CD8-positive, alpha-beta T cell (primary cell): ENCODE measurements at regions of chr3 and their contacts with region 1.

Region 1: DNA sequence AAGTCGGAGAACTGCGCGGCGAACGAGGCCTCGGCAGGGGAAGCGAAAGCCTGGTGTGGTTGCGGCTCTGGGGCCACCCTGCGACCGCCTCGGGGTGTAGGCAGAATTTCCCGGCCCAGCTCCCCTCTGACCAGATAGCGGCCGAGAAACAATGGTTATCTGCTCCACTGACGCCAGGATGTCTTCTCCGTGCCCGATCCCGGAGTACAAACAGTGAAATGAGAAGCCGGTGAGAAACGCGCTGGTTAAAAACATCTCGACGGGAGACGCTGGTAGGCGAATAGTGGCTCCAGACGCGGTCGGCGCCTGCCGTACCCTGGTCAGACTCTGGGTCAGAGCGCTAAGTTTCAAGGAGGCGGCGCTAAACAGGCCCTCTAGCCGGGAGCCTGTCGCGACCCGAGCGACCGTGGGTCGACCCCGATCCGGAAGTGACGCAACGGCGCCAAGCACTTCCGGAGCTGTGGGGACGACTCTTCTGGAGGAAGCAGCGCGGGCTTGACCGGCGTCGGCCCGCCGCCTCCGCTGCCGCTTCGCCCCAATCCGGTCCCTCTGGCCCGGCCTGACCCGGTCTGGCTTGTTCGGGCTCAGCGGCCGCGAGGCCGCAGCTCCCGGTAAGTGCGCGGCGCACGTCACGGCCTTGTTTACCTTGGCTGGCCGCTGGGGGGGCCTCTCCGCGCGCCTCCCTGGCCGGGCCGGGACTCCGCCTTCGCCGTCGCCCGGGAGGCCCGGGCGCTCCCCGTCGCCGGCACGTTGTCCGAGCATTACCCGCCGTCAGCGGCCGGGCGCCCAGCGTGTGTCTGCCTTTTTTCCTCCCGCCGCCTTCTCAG is at the start of gene ARIH2:
- DNase-seq: peak; percentile 74 to 95 (median 88)
- ATAC-seq: peak; percentile 72
- H3K4me3 ChIP-seq: peak within 1 kb of the TSS; percentile 92 to 93
- H3K4me3 Mint-ChIP-seq: peak within 1 kb of the TSS; percentile 98
- H3K27ac ChIP-seq: peak within 1 kb of the TSS; percentile 99
- H3K27ac Mint-ChIP-seq: peak within 1 kb of the TSS; percentile 99
- H3K4me1 ChIP-seq: peaks cover 22% of the 10 kb centered on the region
- H3K4me1 Mint-ChIP-seq: peaks cover 27% of the 10 kb centered on the region
- H3K27me3 ChIP-seq: no peaks in the 10 kb centered on the region
- H3K27me3 Mint-ChIP-seq: no peaks in the 10 kb centered on the region
- CTCF ChIP-seq: peak; percentile 24
- total RNA-seq, gene ARIH2: 225 to 242 TPM

Region 2: DNA sequence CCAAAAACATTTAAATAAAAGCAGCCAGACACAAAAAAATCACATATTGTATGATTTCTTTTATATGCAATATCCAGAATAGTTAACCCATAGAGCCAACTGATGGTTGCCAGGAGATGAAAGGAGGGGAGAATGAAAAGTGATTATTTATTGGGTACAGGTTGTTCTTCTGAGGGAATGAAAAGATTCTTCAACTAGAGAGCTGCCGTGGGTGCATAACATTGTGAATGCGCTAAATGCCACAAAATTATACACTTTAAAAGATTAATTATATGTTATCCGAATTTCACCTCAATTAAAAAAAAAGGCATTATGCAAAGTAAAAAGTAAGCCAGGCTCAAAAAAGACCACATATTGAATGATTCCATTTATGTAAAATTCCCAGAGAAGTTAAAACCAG is 107.1 kb before region 1 on chr3:
- CTCF ChIA-PET with region 1: interaction called, 3 read pairs
- POLR2A ChIA-PET with region 1: interaction called, 5 read pairs
- intact Hi-C with region 1: loop called (anchors 1 kb)
- DNase-seq: no peak
- ATAC-seq: no peak
- H3K4me3 ChIP-seq: no peak overlapping the region
- H3K4me3 Mint-ChIP-seq: no peak overlapping the region
- H3K27ac ChIP-seq: peak overlapping the region; percentile 15 to 89
- H3K27ac Mint-ChIP-seq: peak overlapping the region; percentile 23
- H3K4me1 ChIP-seq: peaks cover 14% of the 10 kb centered on the region
- H3K4me1 Mint-ChIP-seq: peaks cover 35% of the 10 kb centered on the region
- H3K27me3 ChIP-seq: no peaks in the 10 kb centered on the region
- H3K27me3 Mint-ChIP-seq: no peaks in the 10 kb centered on the region
- CTCF ChIP-seq: no peak

Region 3: GRCh38 chr3:48847504-48848423 is 70.8 kb before region 1 on chr3 and contains the start of gene PRKAR2A:
- CTCF ChIA-PET with region 1: no interaction called
- POLR2A ChIA-PET with region 1: interaction called, 8 read pairs
- intact Hi-C with region 1: loop called in 1 of 2 experiments (anchors 1 kb)
- DNase-seq: peak; percentile 67 to 93 (median 83)
- ATAC-seq: peak; percentile 75
- H3K4me3 ChIP-seq: peak within 1 kb of the TSS; percentile 68 to 72
- H3K4me3 Mint-ChIP-seq: peak within 1 kb of the TSS; percentile 86
- H3K27ac ChIP-seq: peak within 1 kb of the TSS; percentile 40 to 90
- H3K27ac Mint-ChIP-seq: peak within 1 kb of the TSS; percentile 97
- H3K4me1 ChIP-seq: peaks cover 26% of the 10 kb centered on the region
- H3K4me1 Mint-ChIP-seq: peaks cover 31% of the 10 kb centered on the region
- H3K27me3 ChIP-seq: no peaks in the 10 kb centered on the region
- H3K27me3 Mint-ChIP-seq: no peaks in the 10 kb centered on the region
- CTCF ChIP-seq: no peak
- total RNA-seq, gene PRKAR2A: 75.2 to 75.6 TPM

Region 4: DNA sequence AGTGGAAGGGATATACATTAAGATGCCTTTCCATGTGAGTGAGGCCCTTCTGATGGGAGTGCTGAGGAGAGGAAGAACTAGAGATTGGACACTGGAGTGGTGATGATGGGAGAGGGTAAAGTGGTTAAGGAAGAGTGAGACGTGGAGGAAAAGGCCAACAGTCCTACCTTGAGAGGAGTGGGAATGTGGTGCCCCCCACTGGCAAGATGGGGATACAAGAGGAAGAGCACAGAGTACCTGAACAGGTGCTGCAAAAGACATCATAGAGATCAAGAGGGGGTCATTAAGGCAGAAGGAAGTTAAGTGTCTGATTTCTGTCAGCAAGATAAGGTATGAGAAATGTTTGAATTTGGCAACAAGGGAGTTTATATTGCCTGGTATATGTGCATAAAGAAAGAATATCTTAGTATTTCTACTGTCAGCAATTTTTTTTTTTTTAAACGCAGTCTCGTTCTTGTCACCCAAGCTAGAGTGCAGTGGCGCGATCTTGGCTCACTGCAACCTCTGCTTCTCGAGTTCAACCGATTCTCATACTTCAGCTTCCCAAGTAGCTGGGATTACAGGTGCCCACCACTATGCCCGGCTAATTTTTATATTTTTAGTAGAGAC is 34.0 kb after region 1 on chr3:
- CTCF ChIA-PET with region 1: interaction called, 3 read pairs
- POLR2A ChIA-PET with region 1: no interaction called
- intact Hi-C with region 1: loop called in 1 of 2 experiments (anchors 1 kb)
- DNase-seq: peak; percentile 22 to 75 (median 61)
- ATAC-seq: peak; percentile 84
- H3K4me3 ChIP-seq: no peak overlapping the region
- H3K4me3 Mint-ChIP-seq: no peak overlapping the region
- H3K27ac ChIP-seq: peak overlapping the region in 1 of 2 experiments; percentile 28
- H3K27ac Mint-ChIP-seq: peak overlapping the region; percentile 7
- H3K4me1 ChIP-seq: no peaks in the 10 kb centered on the region
- H3K4me1 Mint-ChIP-seq: peaks cover 22% of the 10 kb centered on the region
- H3K27me3 ChIP-seq: no peaks in the 10 kb centered on the region
- H3K27me3 Mint-ChIP-seq: no peaks in the 10 kb centered on the region
- CTCF ChIP-seq: peak; percentile 50

Region 5: GRCh38 chr3:49007068-49007770 is 88.6 kb after region 1 on chr3 and contains the start of gene WDR6:
- CTCF ChIA-PET with region 1: no interaction called
- POLR2A ChIA-PET with region 1: interaction called, 6 read pairs
- intact Hi-C with region 1: loop called in 1 of 2 experiments (anchors 2 kb)
- DNase-seq: peak; percentile 94 to 99 (median 96)
- ATAC-seq: peak; percentile 87
- H3K4me3 ChIP-seq: peak within 1 kb of the TSS; percentile 87 to 92
- H3K4me3 Mint-ChIP-seq: peak within 1 kb of the TSS; percentile 100
- H3K27ac ChIP-seq: peak within 1 kb of the TSS; percentile 81 to 92
- H3K27ac Mint-ChIP-seq: peak within 1 kb of the TSS; percentile 99
- H3K4me1 ChIP-seq: peaks cover 15% of the 10 kb centered on the region
- H3K4me1 Mint-ChIP-seq: peaks cover 30% of the 10 kb centered on the region
- H3K27me3 ChIP-seq: no peaks in the 10 kb centered on the region
- H3K27me3 Mint-ChIP-seq: no peaks in the 10 kb centered on the region
- CTCF ChIP-seq: peak; percentile 34
- total RNA-seq, gene WDR6: 112 to 130 TPM